CD4-positive, alpha-beta T cell (primary cell): ENCODE measurements at regions of chr1 and their contacts with region 1.

Region 1: GRCh38 chr1:193537266-193538002 is 351.0 kb upstream of the B3GALT2 start:
- DNase-seq: peak in 13 of 14 experiments; percentile 9 to 86 (median 35)
- ATAC-seq: peak; percentile 79
- H3K4me3 ChIP-seq: peak overlapping the region; percentile 20
- H3K4me3 Mint-ChIP-seq: peak overlapping the region; percentile 50
- H3K27ac ChIP-seq: peak overlapping the region in 1 of 2 donors; percentile 32
- H3K27ac Mint-ChIP-seq: peak overlapping the region; percentile 78
- H3K4me1 ChIP-seq: peaks cover 21% of the 10 kb centered on the region
- H3K4me1 Mint-ChIP-seq: peaks cover 54% of the 10 kb centered on the region
- H3K27me3 ChIP-seq: no peaks in the 10 kb centered on the region
- H3K27me3 Mint-ChIP-seq: no peaks in the 10 kb centered on the region
- CTCF ChIP-seq: no peak

Region 2: DNA sequence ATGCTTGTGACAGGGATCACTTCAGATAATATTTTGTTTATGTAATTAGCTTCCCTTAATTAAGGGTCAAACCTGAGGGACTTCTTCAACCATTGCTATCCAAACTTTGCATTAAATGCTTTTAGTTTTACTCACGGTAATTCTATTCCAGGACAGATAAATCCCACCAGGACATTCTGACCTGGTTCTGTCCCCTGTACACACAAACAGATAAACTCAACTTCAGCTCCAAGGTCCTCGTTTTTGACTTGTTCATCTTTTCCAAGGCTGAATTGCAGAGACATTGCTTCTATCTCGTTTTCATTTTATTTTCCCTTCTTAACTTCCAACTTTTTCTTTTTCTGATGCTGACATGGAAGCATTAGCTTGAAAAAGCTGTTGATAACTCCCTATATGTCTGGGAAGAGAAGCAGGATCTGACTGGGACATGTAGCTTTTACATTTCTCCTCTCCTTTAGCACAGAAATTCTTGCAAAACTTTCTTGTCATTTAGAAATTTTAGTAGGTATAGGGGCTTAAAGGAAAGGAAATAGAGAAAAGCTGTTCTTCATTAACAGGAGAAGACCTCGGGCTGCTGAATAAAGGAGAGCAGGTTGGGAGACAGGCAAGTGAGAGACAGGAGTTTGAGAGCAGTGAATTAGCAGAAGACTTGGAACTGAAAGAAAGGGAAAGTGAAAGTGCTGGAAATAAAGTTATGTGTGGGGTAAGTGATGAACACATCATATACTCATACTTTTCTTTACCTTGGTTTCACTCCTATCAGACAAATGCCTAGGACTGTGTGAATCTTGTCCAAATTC is 119.3 kb before region 1 on chr1:
- CTCF ChIA-PET with region 1: no interaction called
- POLR2A ChIA-PET with region 1: interaction called, 5 read pairs
- intact Hi-C with region 1: loop called in 1 of 2 experiments (anchors 10 kb)
- DNase-seq: peak in 3 of 14 experiments; percentile 63 to 77 (median 63)
- ATAC-seq: peak; percentile 75
- H3K4me3 ChIP-seq: peak overlapping the region; percentile 56
- H3K4me3 Mint-ChIP-seq: peak overlapping the region; percentile 88
- H3K27ac ChIP-seq: peak overlapping the region; percentile 44 to 46
- H3K27ac Mint-ChIP-seq: peak overlapping the region; percentile 94
- H3K4me1 ChIP-seq: peaks cover 9% of the 10 kb centered on the region
- H3K4me1 Mint-ChIP-seq: peaks cover 51% of the 10 kb centered on the region
- H3K27me3 ChIP-seq: no peaks in the 10 kb centered on the region
- H3K27me3 Mint-ChIP-seq: no peaks in the 10 kb centered on the region
- CTCF ChIP-seq: no peak

Region 3: GRCh38 chr1:193456811-193457280 is 80.6 kb before region 1 on chr1:
- CTCF ChIA-PET with region 1: no interaction called
- POLR2A ChIA-PET with region 1: interaction called, 16 read pairs
- intact Hi-C with region 1: loop called in 1 of 2 experiments (anchors 5 kb)
- DNase-seq: peak in 1 of 14 experiments; percentile 17
- ATAC-seq: no peak
- H3K4me3 ChIP-seq: peak overlapping the region; percentile 22
- H3K4me3 Mint-ChIP-seq: no peak overlapping the region
- H3K27ac ChIP-seq: peak overlapping the region in 1 of 2 donors; percentile 85
- H3K27ac Mint-ChIP-seq: no peak overlapping the region
- H3K4me1 ChIP-seq: peaks cover 30% of the 10 kb centered on the region
- H3K4me1 Mint-ChIP-seq: peaks cover 28% of the 10 kb centered on the region
- H3K27me3 ChIP-seq: no peaks in the 10 kb centered on the region
- H3K27me3 Mint-ChIP-seq: no peaks in the 10 kb centered on the region
- CTCF ChIP-seq: no peak

Region 4: DNA sequence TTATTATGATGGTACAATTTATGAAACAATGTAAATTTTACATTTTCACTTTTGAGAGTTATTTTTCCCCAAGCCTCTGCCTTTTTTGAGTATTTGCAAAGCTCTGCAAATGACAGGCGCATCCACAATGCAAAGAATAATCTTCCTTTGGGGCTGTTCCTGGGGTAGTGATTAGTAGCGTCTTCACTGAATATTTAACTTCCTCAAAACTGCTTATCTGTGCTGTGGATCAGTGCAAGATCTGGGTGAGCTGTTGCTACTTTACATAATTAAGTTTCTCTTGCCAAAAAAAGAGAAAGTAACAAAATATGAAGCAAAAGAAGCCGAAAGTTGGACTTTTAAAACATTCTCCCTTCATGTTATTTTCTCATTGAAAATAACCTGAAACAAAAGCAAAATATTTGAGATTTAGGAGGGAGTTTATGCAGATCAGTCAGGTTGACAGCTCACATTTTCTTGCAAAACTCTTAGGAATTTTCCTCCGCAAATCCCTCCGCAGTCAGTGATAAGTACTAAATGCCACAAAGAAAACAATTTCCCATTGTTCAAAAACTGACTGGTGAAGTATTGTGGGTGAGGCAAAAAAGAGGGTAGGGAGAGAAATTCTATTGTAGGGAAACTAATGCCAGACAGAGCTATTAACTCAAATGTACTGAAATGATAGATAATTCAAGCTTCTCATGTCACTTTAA is 74.7 kb before region 1 on chr1:
- CTCF ChIA-PET with region 1: no interaction called
- POLR2A ChIA-PET with region 1: interaction called, 16 read pairs
- intact Hi-C with region 1: loop called in 1 of 2 experiments (anchors 5 kb)
- DNase-seq: peak in 4 of 14 experiments; percentile 29 to 62 (median 56)
- ATAC-seq: peak; percentile 41
- H3K4me3 ChIP-seq: peak overlapping the region; percentile 8
- H3K4me3 Mint-ChIP-seq: peak overlapping the region; percentile 35
- H3K27ac ChIP-seq: peak overlapping the region; percentile 16 to 20
- H3K27ac Mint-ChIP-seq: peak overlapping the region; percentile 75
- H3K4me1 ChIP-seq: peaks cover 19% of the 10 kb centered on the region
- H3K4me1 Mint-ChIP-seq: peaks cover 51% of the 10 kb centered on the region
- H3K27me3 ChIP-seq: no peaks in the 10 kb centered on the region
- H3K27me3 Mint-ChIP-seq: no peaks in the 10 kb centered on the region
- CTCF ChIP-seq: no peak

Region 5: GRCh38 chr1:193525917-193526710 is 11.3 kb before region 1 on chr1:
- CTCF ChIA-PET with region 1: no interaction called
- POLR2A ChIA-PET with region 1: interaction called, 20 read pairs
- intact Hi-C with region 1: no loop called
- DNase-seq: peak in 1 of 14 experiments; percentile 24
- ATAC-seq: no peak
- H3K4me3 ChIP-seq: no peak overlapping the region
- H3K4me3 Mint-ChIP-seq: no peak overlapping the region
- H3K27ac ChIP-seq: no peak overlapping the region
- H3K27ac Mint-ChIP-seq: no peak overlapping the region
- H3K4me1 ChIP-seq: no peaks in the 10 kb centered on the region
- H3K4me1 Mint-ChIP-seq: no peaks in the 10 kb centered on the region
- H3K27me3 ChIP-seq: no peaks in the 10 kb centered on the region
- H3K27me3 Mint-ChIP-seq: no peaks in the 10 kb centered on the region
- CTCF ChIP-seq: no peak

Region 6: GRCh38 chr1:193574913-193575312 is 37.5 kb after region 1 on chr1:
- CTCF ChIA-PET with region 1: no interaction called
- POLR2A ChIA-PET with region 1: no interaction called
- intact Hi-C with region 1: no loop called
- DNase-seq: no peak
- ATAC-seq: no peak
- H3K4me3 ChIP-seq: no peak overlapping the region
- H3K4me3 Mint-ChIP-seq: no peak overlapping the region
- H3K27ac ChIP-seq: no peak overlapping the region
- H3K27ac Mint-ChIP-seq: no peak overlapping the region
- H3K4me1 ChIP-seq: peaks cover 2% of the 10 kb centered on the region
- H3K4me1 Mint-ChIP-seq: peaks cover 9% of the 10 kb centered on the region
- H3K27me3 ChIP-seq: no peaks in the 10 kb centered on the region
- H3K27me3 Mint-ChIP-seq: no peaks in the 10 kb centered on the region
- CTCF ChIP-seq: no peak